ENCODE measurements at regions of chrX and their contacts with region 1.

Region 1: GRCh38 chrX:68807818-68808217 is 21.0 kb upstream of the EFNB1 start:
- DNase-seq: no peak
- H3K4me3 ChIP-seq: no peak overlapping the region
- H3K27ac ChIP-seq: no peak overlapping the region
- H3K4me1 ChIP-seq: no peaks in the 10 kb centered on the region
- H3K27me3 ChIP-seq: peaks cover 0 to 5% (median 0%) of the 10 kb centered on the region in 4 donors
- CTCF ChIP-seq: peak in 2 of 6 experiments; percentile 24 to 30
- POLR2A ChIP-seq: no peak

Region 2: GRCh38 chrX:68273887-68274286 is 533.9 kb before region 1 on chrX:
- intact Hi-C with region 1: no loop called
- DNase-seq: no peak
- H3K4me3 ChIP-seq: no peak overlapping the region
- H3K27ac ChIP-seq: no peak overlapping the region
- H3K4me1 ChIP-seq: no peaks in the 10 kb centered on the region
- H3K27me3 ChIP-seq: no peaks in the 10 kb centered on the region
- CTCF ChIP-seq: no peak
- POLR2A ChIP-seq: no peak

Region 3: DNA sequence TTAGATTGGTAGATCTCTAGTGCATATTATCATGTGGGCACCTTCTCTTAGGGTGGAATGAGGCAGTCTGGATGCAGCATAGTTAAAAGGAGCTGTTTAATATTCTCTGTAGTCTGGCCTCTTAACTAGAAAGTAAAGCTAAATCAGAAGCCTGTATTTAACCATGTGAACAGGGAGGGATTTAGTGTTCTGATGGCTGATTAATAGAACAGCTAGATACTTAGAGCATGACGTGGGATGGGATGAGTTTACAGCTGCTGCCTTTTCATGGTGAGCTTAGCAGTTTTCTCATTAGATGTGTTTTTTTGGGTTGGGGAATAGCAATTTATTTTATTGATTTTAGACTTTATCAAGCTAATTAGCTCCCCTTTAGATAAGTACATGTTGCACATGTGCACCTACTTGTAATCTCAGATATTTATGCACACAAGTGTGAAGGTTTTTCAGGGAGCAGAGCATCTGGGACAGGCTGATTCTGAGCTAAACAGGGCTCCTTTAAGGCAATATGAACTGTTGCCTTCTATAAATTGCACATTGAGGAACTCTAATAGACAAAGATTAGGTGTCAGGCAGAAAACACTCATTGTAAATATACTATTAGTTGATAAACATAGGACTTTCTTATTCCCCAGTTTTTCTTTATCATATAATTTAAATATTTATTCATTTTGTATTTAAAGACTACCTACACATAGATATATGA is 274.8 kb before region 1 on chrX:
- intact Hi-C with region 1: no loop called
- DNase-seq: no peak
- H3K4me3 ChIP-seq: no peak overlapping the region
- H3K27ac ChIP-seq: peak overlapping the region in 1 of 4 donors; percentile 14
- H3K4me1 ChIP-seq: no peaks in the 10 kb centered on the region
- H3K27me3 ChIP-seq: no peaks in the 10 kb centered on the region
- CTCF ChIP-seq: no peak
- POLR2A ChIP-seq: no peak

Region 4: DNA sequence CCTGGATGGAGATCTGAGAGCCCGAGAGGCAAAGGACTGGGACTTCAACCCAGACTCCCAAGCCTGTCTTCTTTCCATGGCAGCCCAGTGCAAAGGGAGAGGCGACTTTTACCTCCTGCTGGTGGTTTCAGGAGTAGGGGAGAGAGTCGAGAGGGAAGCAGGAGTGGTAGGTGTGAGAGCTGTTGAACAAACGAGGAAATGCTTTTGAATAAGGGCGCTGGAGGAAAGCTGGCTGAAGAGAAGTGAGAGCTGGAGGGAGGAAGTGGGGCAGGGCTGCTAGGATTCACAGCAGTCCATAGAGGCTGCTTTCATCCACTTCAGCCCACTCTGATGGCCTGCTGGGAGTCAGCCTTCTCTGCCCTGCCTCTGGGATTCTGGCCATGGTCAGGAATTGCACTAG is 60.8 kb before region 1 on chrX:
- intact Hi-C with region 1: loop called (anchors 10 kb)
- DNase-seq: no peak
- H3K4me3 ChIP-seq: no peak overlapping the region
- H3K27ac ChIP-seq: no peak overlapping the region
- H3K4me1 ChIP-seq: no peaks in the 10 kb centered on the region
- H3K27me3 ChIP-seq: no peaks in the 10 kb centered on the region
- CTCF ChIP-seq: no peak
- POLR2A ChIP-seq: no peak

Region 5: GRCh38 chrX:69179380-69179911 is 371.6 kb after region 1 on chrX:
- intact Hi-C with region 1: no loop called
- DNase-seq: no peak
- H3K4me3 ChIP-seq: no peak overlapping the region
- H3K27ac ChIP-seq: no peak overlapping the region
- H3K4me1 ChIP-seq: no peaks in the 10 kb centered on the region
- H3K27me3 ChIP-seq: no peaks in the 10 kb centered on the region
- CTCF ChIP-seq: no peak
- POLR2A ChIP-seq: no peak

Region 6: DNA sequence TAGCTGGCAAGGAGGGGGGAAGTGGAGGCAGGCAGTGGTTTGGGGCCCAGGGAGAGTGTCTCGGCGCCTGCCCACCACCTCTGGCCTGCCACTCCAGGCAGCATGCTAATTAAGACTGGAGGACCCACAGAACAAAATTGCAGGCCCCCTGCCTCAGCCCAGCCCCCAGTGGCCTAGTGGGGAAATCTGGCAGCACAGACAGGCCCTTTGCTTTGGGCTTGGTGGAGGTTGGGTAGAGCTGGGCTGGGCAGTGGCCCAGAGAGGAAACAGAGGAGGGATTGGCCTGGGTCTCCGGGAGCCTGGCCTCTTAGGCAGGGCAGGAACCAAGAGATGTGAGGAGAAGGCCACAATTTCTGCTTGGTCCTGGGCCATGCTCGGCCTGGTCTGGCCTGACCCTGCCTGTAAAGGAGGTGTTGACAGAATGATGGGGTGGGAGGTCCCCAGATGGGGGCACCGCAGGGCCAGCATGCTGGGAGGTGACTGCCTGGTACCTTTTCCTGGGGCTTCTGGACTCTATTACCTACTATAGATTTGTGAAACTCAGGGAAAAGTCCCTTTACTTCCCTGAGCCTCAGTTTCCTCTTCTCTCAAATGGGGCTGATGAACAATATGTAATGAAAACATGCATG is 449.8 kb after region 1 on chrX:
- intact Hi-C with region 1: no loop called
- DNase-seq: no peak
- H3K4me3 ChIP-seq: no peak overlapping the region
- H3K27ac ChIP-seq: no peak overlapping the region
- H3K4me1 ChIP-seq: no peaks in the 10 kb centered on the region
- H3K27me3 ChIP-seq: no peaks in the 10 kb centered on the region
- CTCF ChIP-seq: no peak
- POLR2A ChIP-seq: no peak

Measured in esophagus squamous epithelium (tissue), 5 donors.